ENCODE measurements at regions of chr19 and their contacts with region 1.

Region 1: GRCh38 chr19:35545001-35545911 is at the start of gene TMEM147:
- DNase-seq: peak; percentile 92 to 97
- ATAC-seq: peak; percentile 97
- total RNA-seq, gene TMEM147: 55.1 to 61.2 TPM

Region 2: DNA sequence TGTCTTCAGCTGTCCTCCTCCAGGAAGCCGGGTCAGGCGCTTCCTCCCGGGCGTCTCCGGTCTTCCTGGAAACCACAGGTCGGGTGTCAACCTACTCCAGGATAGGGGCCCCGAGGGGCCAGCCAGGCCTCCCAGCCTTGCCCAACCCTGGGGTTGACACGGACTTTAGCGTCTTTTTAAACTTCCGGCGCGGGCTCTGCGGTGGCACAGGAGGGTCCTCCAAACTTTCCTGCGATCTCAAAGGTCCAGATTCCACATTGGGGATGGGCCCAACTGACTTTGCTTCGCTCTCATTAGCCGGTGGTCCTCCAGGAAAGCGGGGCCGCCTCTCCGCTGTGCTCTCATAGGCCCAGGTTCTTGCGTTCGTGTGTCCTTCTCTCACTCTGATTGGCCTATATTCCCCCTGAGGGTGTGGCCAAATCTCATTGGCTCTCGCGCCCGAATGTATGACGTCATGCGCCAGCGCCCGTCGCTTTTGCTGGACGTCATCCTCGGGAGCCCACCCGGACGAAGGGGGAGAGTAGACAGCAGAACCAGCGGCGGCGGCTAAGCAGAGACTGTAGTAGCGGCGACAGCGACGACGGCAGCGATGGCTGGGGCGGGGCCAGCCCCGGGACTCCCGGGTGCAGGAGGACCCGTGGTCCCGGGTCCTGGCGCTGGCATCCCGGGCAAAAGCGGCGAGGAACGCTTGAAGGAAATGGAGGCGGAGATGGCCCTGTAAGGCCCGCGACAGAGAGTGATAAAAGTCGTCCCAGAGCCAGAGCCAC is 83.5 kb after region 1 on chr19 and contains the start of gene RBM42:
- intact Hi-C with region 1: no loop called
- DNase-seq: peak; percentile 96 to 98
- ATAC-seq: peak; percentile 99
- total RNA-seq, gene RBM42: 66.5 to 73.7 TPM

Region 3: DNA sequence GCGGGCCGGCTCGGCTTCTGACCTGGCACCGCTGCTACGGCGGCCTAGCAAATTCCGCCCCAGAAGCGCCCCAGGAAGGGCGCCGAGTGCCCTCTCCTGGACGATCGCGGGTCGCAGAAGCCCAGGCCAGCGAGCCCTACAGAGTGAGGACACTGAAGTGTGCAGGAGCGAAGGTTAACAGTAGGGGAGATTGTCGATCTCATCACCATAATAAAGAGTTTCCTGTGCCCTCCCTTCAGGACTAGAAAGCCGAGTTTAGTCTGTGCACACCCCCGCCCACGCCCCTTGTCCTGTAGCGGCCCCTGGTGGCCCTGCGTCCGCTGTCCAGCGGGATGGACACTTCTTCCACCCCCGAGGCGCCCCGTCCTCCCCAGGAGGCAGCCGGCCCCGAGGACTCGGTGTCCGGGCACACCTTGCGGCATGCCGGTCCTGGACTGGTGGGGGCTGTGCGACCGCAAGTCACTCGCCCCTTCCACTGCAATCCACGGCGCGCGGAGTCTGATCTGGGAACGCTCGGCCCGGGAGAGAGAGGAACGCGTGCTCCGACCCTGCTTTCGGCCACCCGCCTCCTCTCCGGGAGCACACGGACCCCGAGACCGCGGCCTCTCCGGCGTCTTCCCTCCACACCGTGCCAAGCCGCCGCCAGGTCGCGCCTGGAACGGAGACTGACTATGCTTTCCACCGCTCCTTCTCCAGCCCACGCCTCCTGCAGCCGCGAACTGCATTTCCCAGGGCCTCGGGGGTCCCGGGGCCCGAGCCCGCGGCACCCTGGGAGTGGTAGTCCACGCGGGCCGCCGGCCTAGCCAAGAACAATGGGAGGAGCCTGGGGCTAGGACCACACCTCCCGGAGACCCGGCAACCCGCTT is 171.8 kb after region 1 on chr19:
- intact Hi-C with region 1: loop called in 1 of 2 experiments (anchors 10 kb)
- DNase-seq: peak; percentile 90 to 97
- ATAC-seq: peak; percentile 86